ENCODE measurements at regions of chr9 and their contacts with region 1.

Region 1: GRCh38 chr9:116494815-116495634 is 192.1 kb upstream of the TRIM32 start:
- DNase-seq: no peak
- H3K4me3 ChIP-seq: no peak overlapping the region
- H3K27ac ChIP-seq: no peak overlapping the region
- H3K4me1 ChIP-seq: no peaks in the 10 kb centered on the region
- H3K27me3 ChIP-seq: no peaks in the 10 kb centered on the region
- CTCF ChIP-seq: peak; percentile 29 to 65
- POLR2A ChIP-seq: no peak

Region 2: GRCh38 chr9:116163293-116164055 is 331.6 kb before region 1 on chr9:
- CTCF ChIA-PET with region 1: no interaction called
- POLR2A ChIA-PET with region 1: no interaction called
- dilution Hi-C with region 1: no loop called
- intact Hi-C with region 1: loop called (anchors 5 kb)
- DNase-seq: no peak
- H3K4me3 ChIP-seq: no peak overlapping the region
- H3K27ac ChIP-seq: no peak overlapping the region
- H3K4me1 ChIP-seq: no peaks in the 10 kb centered on the region
- H3K27me3 ChIP-seq: no peaks in the 10 kb centered on the region
- CTCF ChIP-seq: peak; percentile 20 to 28
- POLR2A ChIP-seq: no peak